Psoas muscle (tissue), 8 donors: ENCODE measurements at regions of chr15 and their contacts with region 1.

Region 1: DNA sequence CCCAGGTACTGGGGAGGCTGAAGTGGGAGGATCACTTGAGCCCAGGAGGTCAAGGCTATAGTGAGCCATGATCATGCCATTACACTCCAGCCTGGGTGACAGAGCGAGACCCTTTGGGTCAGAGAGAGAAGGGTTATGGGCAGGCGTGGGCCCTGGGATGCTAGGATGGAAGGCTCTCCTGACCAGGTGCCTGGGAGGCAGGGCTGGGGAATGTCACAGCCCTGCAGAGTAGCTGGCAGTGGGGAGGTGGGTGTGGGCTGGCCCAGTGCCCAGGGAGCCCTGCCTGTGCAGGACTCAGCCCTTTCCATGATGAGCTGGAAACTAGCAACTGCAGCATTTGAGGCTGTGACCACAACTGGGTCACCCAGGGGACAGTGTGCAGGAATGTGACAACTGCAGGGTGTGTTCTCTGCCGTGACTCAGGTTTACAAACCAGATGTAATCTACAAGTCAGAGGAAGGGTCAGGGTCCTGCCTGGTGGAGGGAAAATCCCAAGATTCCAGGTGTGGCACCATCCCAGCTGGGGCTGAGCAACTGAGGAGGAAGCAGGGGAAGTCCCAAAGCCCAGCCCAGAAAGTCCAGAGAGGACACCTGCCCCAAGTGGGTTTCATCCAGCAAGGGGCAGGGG is 45.4 kb downstream of the SLC28A1 start:
- DNase-seq: no peak
- ATAC-seq: peak in 3 of 4 donors; percentile 22 to 39 (median 34)
- H3K4me3 ChIP-seq: no peak overlapping the region
- H3K27ac ChIP-seq: no peak overlapping the region
- H3K4me1 ChIP-seq: peaks cover 10% of the 10 kb centered on the region
- H3K27me3 ChIP-seq: no peaks in the 10 kb centered on the region
- CTCF ChIP-seq: no peak

Region 2: GRCh38 chr15:84588053-84588874 is 341.6 kb before region 1 on chr15:
- intact Hi-C with region 1: loop called (anchors 5 kb)
- DNase-seq: peak; percentile 85 to 92
- ATAC-seq: peak; percentile 99 to 100 (median 100)
- H3K4me3 ChIP-seq: peak overlapping the region; percentile 60
- H3K27ac ChIP-seq: no peak overlapping the region
- H3K4me1 ChIP-seq: peaks cover 4% of the 10 kb centered on the region
- H3K27me3 ChIP-seq: no peaks in the 10 kb centered on the region
- CTCF ChIP-seq: peak; percentile 85

Region 3: GRCh38 chr15:84658080-84658787 is 271.6 kb before region 1 on chr15 and contains the start of gene NMB:
- intact Hi-C with region 1: loop called in 1 of 2 experiments (anchors 10 kb)
- DNase-seq: peak; percentile 81 to 90
- ATAC-seq: peak; percentile 61 to 80 (median 74)
- H3K4me3 ChIP-seq: peak within 1 kb of the TSS; percentile 73
- H3K27ac ChIP-seq: peak within 1 kb of the TSS; percentile 80
- H3K4me1 ChIP-seq: peaks cover 18% of the 10 kb centered on the region
- H3K27me3 ChIP-seq: no peaks in the 10 kb centered on the region
- CTCF ChIP-seq: peak; percentile 44
- total RNA-seq, gene NMB: 1.0 to 2.1 (median 1.2) TPM

Region 4: GRCh38 chr15:84840741-84841429 is 89.0 kb before region 1 on chr15:
- intact Hi-C with region 1: loop called (anchors 1 to 5 kb)
- DNase-seq: peak; percentile 80 to 93
- ATAC-seq: peak; percentile 80 to 86 (median 83)
- H3K4me3 ChIP-seq: peak overlapping the region; percentile 38
- H3K27ac ChIP-seq: peak overlapping the region; percentile 99
- H3K4me1 ChIP-seq: peaks cover 79% of the 10 kb centered on the region
- H3K27me3 ChIP-seq: no peaks in the 10 kb centered on the region
- CTCF ChIP-seq: no peak

Region 5: GRCh38 chr15:84863565-84864443 is 66.1 kb before region 1 on chr15:
- intact Hi-C with region 1: loop called in 1 of 2 experiments (anchors 5 kb)
- DNase-seq: no peak
- ATAC-seq: peak in 1 of 4 donors; percentile 3
- H3K4me3 ChIP-seq: no peak overlapping the region
- H3K27ac ChIP-seq: no peak overlapping the region
- H3K4me1 ChIP-seq: peaks cover 9% of the 10 kb centered on the region
- H3K27me3 ChIP-seq: no peaks in the 10 kb centered on the region
- CTCF ChIP-seq: peak; percentile 13

Region 6: DNA sequence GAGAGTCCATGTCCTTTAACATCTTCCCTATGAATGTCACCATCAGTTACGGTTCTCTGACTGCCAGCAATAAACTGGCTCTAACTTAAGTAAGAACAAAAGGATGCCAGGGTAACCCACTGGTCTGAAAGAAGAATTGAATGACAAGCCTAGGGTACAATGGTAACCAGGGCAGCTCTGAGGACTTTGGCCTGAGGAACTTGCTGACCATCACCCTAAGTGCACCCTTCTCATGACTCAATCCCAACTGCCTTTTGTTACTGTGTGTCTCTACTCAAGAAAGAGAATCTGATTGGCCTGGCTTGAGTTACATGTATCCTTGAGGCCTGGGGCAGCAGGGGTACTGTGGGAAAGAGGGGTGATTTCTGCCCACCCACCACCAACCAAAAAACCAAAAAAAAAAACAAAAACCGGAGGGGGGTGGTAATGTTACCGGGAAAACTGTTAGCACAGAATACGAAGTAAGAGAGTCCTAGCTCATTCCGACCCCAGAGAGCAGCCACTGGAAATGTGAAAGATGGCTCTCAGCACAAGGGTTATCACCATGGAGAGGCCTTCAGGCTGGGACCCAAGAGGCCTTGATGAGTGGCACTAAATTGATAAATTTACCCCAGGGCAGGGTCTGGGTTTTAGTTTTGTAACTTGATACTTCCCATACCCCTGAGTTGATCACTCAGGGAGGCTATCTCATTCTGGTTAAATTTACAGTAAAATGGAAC is 54.7 kb before region 1 on chr15:
- intact Hi-C with region 1: loop called (anchors 5 kb)
- DNase-seq: no peak
- ATAC-seq: peak in 3 of 4 donors; percentile 17 to 30 (median 26)
- H3K4me3 ChIP-seq: no peak overlapping the region
- H3K27ac ChIP-seq: no peak overlapping the region
- H3K4me1 ChIP-seq: peaks cover 24% of the 10 kb centered on the region
- H3K27me3 ChIP-seq: no peaks in the 10 kb centered on the region
- CTCF ChIP-seq: no peak

Region 7: DNA sequence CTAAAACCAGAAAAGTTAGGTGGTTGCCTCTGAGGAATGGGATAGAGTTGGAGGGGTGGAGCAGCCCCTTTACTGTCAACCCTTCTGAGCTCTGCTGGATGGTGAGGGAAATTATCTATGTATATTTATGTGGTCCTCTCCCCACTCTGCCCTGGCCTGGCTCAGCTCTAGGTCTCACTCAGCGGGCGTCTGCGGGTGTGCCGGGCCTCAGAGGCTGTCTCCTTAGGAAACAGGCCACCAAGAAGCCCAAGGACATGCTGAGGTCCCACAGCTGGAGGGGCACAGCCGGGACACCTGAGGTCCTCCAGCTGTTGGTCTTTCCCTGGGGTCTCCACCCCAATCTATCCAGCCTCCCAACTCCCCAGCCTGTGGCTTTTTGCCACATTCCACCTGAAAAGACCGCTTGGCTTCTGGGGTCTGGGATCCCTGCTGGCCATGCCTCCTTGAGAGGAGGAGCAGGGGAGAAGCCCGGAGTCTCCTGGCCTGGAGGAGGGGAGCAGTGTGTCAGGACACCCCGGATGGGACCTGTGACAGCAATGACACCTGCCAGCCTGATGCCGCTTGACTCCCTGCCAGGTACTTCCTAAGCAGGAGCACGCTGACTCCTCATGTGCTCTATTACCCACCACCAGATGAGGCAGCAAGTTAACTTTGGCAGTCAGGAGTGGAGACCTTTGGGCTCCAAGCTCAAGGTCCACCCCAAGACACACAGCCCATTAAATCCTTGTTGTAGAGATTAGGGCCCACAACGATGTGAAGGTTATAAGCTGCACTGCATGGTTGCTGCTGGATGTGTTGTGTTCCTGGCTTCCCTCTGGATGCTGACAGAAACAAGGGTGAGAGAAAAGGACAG is 45.7 kb before region 1 on chr15 and contains the start of gene SLC28A1:
- intact Hi-C with region 1: loop called (anchors 5 kb)
- DNase-seq: no peak
- ATAC-seq: peak; percentile 59 to 82 (median 65)
- H3K4me3 ChIP-seq: no peak within 1 kb of the TSS
- H3K27ac ChIP-seq: no peak within 1 kb of the TSS
- H3K4me1 ChIP-seq: no peaks in the 10 kb centered on the region
- H3K27me3 ChIP-seq: no peaks in the 10 kb centered on the region
- CTCF ChIP-seq: no peak
- total RNA-seq, gene SLC28A1: 0.23 to 1.9 (median 0.44) TPM